ENCODE measurements at regions of chr19 and their contacts with region 1.

Region 1: DNA sequence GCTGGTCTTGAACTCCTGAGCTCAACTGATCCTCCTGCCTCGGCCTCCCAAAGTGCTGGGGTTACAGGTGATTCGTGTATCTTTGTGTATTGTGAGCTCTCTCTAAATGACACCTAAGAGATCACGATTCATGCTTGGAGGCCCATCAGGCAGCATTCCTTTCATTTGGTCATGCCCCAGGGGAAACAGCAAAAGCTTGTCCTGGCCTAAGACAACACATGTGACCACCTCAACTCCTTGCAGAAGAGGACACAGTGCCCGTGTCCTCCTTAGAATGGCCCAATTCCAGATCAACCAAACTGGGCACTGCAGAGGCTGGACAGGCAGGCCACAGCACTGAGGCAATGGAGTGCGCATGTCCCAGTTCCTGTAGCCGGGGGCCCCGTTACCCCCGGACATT is 32.5 kb downstream of the ZC3H4 start:
- DNase-seq: no peak
- H3K4me3 ChIP-seq: no peak overlapping the region
- H3K27ac ChIP-seq: no peak overlapping the region
- H3K4me1 ChIP-seq: no peaks in the 10 kb centered on the region
- H3K27me3 ChIP-seq: no peaks in the 10 kb centered on the region
- CTCF ChIP-seq: no peak
- EP300 ChIP-seq: no peak
- POLR2A ChIP-seq: no peak
- RAD21 ChIP-seq: no peak

Region 2: GRCh38 chr19:47028195-47028601 is 52.9 kb before region 1 on chr19:
- CTCF ChIA-PET with region 1: no interaction called
- POLR2A ChIA-PET with region 1: no interaction called
- DNase-seq: no peak
- H3K4me3 ChIP-seq: peak overlapping the region in 2 of 4 experiments; percentile 19 to 35; a peak in 2 of 8 replicates
- H3K27ac ChIP-seq: no peak overlapping the region
- H3K4me1 ChIP-seq: peaks cover 8 to 18% (median 12%) of the 10 kb centered on the region in 4 experiments
- H3K27me3 ChIP-seq: peaks cover 1 to 9% (median 5%) of the 10 kb centered on the region in 4 experiments
- CTCF ChIP-seq: no peak
- EP300 ChIP-seq: no peak
- POLR2A ChIP-seq: no peak
- RAD21 ChIP-seq: no peak

Region 3: DNA sequence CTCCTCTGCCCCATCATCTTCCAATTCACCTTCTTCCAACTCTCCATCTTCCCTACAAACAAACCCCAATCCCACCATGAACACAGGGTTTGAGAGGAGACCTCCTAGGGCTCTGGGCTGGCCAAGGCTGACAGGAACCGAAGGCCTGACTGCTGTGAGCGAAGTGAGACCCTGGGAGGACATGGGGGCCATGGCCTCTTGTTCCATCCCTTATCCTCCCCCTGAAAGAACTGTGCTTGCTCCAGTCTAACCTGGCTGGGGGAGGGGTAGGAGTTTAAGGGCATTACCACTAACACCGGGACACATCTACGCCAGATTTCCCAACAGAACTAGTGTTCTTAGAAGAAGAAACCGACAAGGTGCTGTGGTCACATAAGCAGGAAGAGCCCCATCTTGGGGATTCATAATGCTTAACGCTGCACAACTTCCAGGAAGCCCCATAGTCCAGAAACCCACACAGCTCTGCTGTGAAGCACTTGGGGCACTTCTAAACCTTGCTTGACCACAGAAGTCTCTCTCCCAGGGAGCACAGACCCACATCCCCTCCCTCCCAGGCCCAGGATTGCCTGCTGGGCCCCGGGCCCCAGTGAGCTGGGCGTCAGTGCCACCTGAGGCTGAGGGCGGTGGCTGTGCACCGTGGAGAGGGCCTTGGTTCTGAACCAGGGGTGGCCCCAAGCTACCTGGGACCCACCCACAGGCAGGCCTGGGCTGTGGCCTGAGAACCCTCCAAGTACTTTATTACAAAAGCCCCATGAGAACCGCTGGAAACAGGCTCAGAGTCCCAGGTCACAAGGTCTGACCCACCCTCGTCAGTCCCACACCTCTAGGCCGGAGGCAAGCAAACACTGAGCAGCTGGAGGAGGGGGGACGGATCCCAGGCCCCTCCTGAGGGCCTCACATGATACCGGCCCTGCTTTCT is 13.7 kb after region 1 on chr19:
- CTCF ChIA-PET with region 1: interaction called, 32 read pairs
- POLR2A ChIA-PET with region 1: interaction called, 16 read pairs
- DNase-seq: no peak
- H3K4me3 ChIP-seq: no peak overlapping the region
- H3K27ac ChIP-seq: no peak overlapping the region; the same call in 1 of the 2 replicates
- H3K4me1 ChIP-seq: peaks cover 2 to 8% (median 4%) of the 10 kb centered on the region in 4 experiments; a peak in 3 of 7 replicates
- H3K27me3 ChIP-seq: no peaks in the 10 kb centered on the region; a peak in 1 of 7 replicates
- CTCF ChIP-seq: no peak
- EP300 ChIP-seq: no peak
- POLR2A ChIP-seq: no peak
- RAD21 ChIP-seq: no peak

Region 4: DNA sequence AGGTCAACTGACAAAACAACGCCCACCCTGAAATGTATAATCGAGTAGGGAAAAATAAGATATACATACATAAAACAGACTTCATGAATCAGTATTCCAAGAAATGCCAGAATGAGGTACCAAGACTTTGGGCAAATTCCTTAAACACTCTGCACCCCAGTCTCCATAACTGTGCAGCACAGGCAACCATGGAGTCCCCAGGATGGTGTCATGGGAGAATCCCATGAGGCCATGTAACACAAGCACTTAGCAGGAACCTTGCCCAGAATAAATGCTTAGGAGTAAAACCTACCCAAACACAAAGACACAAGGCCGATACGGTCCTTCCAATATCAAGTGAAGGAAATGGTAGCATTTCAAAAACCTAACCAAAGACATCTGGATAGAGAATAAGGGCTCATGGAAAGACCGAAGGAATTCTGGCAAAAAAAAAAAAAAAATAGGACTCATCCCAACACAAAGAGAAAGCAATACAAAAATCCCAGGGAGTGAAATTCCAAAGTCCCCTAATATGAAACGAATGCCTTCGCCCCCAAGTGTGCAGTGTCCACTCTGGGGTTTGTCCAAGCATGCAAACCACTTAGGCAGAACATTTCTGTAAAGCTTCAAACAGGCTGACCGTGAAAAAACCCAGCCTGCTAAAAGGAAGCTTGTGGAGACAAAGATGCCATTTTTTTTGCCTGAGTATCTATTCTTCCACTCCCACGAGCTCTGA is 21.4 kb after region 1 on chr19:
- CTCF ChIA-PET with region 1: interaction called, 32 read pairs
- POLR2A ChIA-PET with region 1: interaction called, 16 read pairs
- DNase-seq: no peak
- H3K4me3 ChIP-seq: no peak overlapping the region
- H3K27ac ChIP-seq: no peak overlapping the region
- H3K4me1 ChIP-seq: peaks cover 0 to 9% (median 1%) of the 10 kb centered on the region in 4 experiments; a peak in 2 of 7 replicates
- H3K27me3 ChIP-seq: no peaks in the 10 kb centered on the region
- CTCF ChIP-seq: no peak
- EP300 ChIP-seq: no peak
- POLR2A ChIP-seq: no peak
- RAD21 ChIP-seq: no peak

Region 5: DNA sequence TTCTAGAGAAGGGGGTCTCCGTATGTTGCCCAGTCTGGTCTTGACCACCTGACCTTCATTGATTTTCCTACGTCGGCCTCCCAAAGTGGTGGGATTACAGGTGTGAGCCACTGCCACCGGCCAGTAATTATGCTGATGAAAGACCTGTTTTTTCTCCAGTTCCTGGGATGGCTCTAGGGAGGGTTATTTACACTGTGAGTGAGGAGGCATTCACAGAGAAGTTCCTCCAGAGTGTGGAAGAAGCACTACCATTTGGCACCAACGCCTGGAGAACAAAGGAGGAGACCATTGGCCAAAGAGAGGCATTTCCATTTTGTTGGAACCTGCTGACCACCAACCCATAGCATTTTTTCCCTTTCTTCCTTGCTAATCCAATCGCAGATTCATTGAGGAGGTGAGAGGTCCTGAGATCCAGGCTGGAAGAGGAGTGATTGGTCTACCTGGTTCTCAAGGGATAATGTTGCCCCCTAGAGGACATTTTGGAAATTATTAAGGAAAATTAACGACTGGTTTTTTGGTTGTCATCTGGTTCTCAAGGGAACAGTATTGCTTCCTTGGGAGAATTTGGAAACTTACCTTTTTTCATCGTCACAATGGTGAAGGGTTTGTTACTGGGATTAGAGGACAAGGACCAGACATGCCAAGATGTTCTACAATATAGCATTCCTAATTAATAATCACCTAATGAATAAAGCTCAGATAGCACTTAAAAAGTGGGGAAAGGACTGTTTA is 44.0 kb after region 1 on chr19:
- CTCF ChIA-PET with region 1: interaction called, 28 read pairs
- POLR2A ChIA-PET with region 1: interaction called, 5 read pairs
- DNase-seq: no peak
- H3K4me3 ChIP-seq: no peak overlapping the region
- H3K27ac ChIP-seq: no peak overlapping the region
- H3K4me1 ChIP-seq: peaks cover 0 to 4% (median 1%) of the 10 kb centered on the region in 4 experiments; a peak in 1 of 7 replicates
- H3K27me3 ChIP-seq: no peaks in the 10 kb centered on the region
- CTCF ChIP-seq: peak in 2 of 3 experiments; percentile 63 to 67; a peak in 2 of 4 replicates
- EP300 ChIP-seq: no peak
- POLR2A ChIP-seq: no peak
- RAD21 ChIP-seq: peak; percentile 81 to 84

Measured in H1 (cell line).